H1 (cell line): ENCODE measurements at regions of chr12 and their contacts with region 1.

Region 1: DNA sequence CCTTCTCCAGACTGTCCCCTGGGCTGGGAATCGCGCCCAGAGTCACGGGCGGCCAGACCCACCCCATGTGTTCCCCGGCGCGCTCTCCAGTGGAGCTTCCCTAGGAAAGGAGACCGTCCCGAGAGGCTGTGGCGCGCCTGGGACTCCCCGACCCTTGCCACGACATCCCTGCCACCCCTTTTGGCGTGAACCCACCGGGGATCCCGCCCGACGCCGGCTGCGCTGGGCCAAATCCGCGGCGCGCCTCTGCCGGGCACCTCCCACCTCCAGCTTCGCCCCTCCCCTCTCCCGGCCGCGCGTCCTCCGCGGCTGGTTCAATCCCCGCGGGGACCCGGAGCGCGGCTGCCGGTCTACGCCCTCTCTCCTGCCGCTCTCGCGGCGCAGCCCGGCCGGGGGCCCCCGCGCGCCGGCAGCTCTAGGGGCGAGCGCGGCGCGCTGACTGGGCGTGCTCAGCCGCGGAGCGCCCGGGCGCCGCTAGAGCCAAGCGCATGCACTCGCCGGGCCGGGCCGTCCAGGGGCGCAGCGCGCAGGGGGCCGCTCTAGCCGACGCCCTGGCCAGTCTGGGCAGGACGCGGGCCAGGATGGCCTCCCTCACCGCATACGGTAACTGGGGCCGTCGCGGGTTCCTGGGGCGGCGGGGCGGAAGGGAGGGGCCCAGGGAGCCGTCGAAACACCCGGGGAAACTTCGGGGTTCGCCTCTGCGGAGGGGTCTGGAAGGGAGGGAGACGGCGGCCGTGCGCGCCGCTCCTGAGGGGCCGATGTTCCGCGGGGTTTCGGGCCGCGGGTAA is 77.4 kb upstream of the ANO4 start:
- DNase-seq: peak in 1 of 2 experiments; percentile 72
- H3K4me3 ChIP-seq: peak overlapping the region; percentile 42 to 64 (median 52)
- H3K27ac ChIP-seq: no peak overlapping the region
- H3K4me1 ChIP-seq: peaks cover 0 to 8% (median 4%) of the 10 kb centered on the region in 4 experiments
- H3K27me3 ChIP-seq: peaks cover 20 to 43% (median 32%) of the 10 kb centered on the region in 4 experiments
- CTCF ChIP-seq: no peak
- EP300 ChIP-seq: no peak
- POLR2A ChIP-seq: no peak
- RAD21 ChIP-seq: no peak

Region 2: DNA sequence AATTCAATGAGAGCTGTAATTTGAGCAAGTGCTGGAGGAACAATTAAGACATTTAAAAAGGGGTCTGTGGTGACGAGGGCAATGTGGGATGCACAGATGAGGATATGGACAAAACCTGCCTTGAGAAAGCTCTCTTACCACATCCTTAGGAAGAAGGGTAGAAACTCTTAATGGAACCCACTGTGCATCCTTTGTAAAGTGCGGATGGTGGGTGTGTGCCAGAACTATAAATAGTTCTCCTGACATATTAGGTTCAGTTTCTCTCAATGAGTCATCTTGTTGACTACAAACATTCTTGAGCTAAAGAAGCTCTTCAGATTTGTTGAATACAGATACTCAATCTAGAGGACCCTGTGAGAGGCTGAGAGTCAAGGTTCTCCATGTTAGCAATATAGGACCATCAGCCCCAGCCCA is 28.7 kb before region 1 on chr12:
- CTCF ChIA-PET with region 1: interaction called, 11 read pairs
- POLR2A ChIA-PET with region 1: no interaction called
- DNase-seq: no peak
- H3K4me3 ChIP-seq: no peak overlapping the region
- H3K27ac ChIP-seq: no peak overlapping the region
- H3K4me1 ChIP-seq: no peaks in the 10 kb centered on the region; a peak in 1 of 7 replicates
- H3K27me3 ChIP-seq: no peaks in the 10 kb centered on the region
- CTCF ChIP-seq: no peak
- EP300 ChIP-seq: no peak
- POLR2A ChIP-seq: no peak
- RAD21 ChIP-seq: no peak

Region 3: GRCh38 chr12:100733817-100734593 is 16.9 kb after region 1 on chr12:
- CTCF ChIA-PET with region 1: interaction called, 11 read pairs
- POLR2A ChIA-PET with region 1: no interaction called
- DNase-seq: no peak
- H3K4me3 ChIP-seq: no peak overlapping the region
- H3K27ac ChIP-seq: no peak overlapping the region
- H3K4me1 ChIP-seq: no peaks in the 10 kb centered on the region
- H3K27me3 ChIP-seq: no peaks in the 10 kb centered on the region
- CTCF ChIP-seq: peak in 2 of 3 experiments; percentile 46 to 50; a peak in 2 of 4 replicates
- EP300 ChIP-seq: no peak
- POLR2A ChIP-seq: no peak
- RAD21 ChIP-seq: peak; percentile 45 to 48

Region 4: GRCh38 chr12:100951756-100952155 is 234.6 kb after region 1 on chr12:
- CTCF ChIA-PET with region 1: no interaction called
- POLR2A ChIA-PET with region 1: no interaction called
- DNase-seq: no peak
- H3K4me3 ChIP-seq: no peak overlapping the region
- H3K27ac ChIP-seq: no peak overlapping the region
- H3K4me1 ChIP-seq: peaks cover 3 to 24% (median 19%) of the 10 kb centered on the region in 4 experiments
- H3K27me3 ChIP-seq: no peaks in the 10 kb centered on the region
- CTCF ChIP-seq: peak in 2 of 3 experiments; percentile 24 to 44; a peak in 2 of 4 replicates
- EP300 ChIP-seq: no peak
- POLR2A ChIP-seq: no peak
- RAD21 ChIP-seq: peak; percentile 64 to 75